A549 (cell line): ENCODE measurements at regions of chr1 and their contacts with region 1.

Region 1: GRCh38 chr1:172532700-172533509 is at the start of gene SUCO:
- DNase-seq: peak; percentile 91 to 99
- ATAC-seq: peak; percentile 94 to 96
- H3K4me3 ChIP-seq: peak within 1 kb of the TSS; percentile 75
- H3K27ac ChIP-seq: peak within 1 kb of the TSS; percentile 95 to 96
- H3K4me1 ChIP-seq: peaks cover 33% of the 10 kb centered on the region
- CTCF ChIP-seq: no peak
- EP300 ChIP-seq: no peak
- POLR2A ChIP-seq: peak; percentile 78
- RAD21 ChIP-seq: peak; percentile 8 to 12; a peak in 1 of 5 replicates
- polyA plus RNA-seq, gene SUCO: 17.7 and 21.8 TPM in 2 replicates

Region 2: GRCh38 chr1:172286629-172287076 is 246.3 kb before region 1 on chr1:
- CTCF ChIA-PET with region 1: no interaction called
- POLR2A ChIA-PET with region 1: no interaction called
- DNase-seq: peak in 1 of 2 experiments; percentile 26
- ATAC-seq: peak in 1 of 2 experiments; percentile 62; a peak in 3 of 6 replicates
- H3K4me3 ChIP-seq: no peak overlapping the region
- H3K27ac ChIP-seq: peak overlapping the region; percentile 37 to 46; a peak in 5 of 6 replicates
- H3K4me1 ChIP-seq: peaks cover 13% of the 10 kb centered on the region
- CTCF ChIP-seq: no peak
- EP300 ChIP-seq: no peak
- POLR2A ChIP-seq: no peak
- RAD21 ChIP-seq: no peak

Region 3: GRCh38 chr1:172408958-172409357 is 123.9 kb before region 1 on chr1:
- CTCF ChIA-PET with region 1: no interaction called
- POLR2A ChIA-PET with region 1: no interaction called
- DNase-seq: no peak
- ATAC-seq: no peak
- H3K4me3 ChIP-seq: no peak overlapping the region
- H3K27ac ChIP-seq: no peak overlapping the region
- H3K4me1 ChIP-seq: no peaks in the 10 kb centered on the region
- CTCF ChIP-seq: no peak
- EP300 ChIP-seq: no peak
- POLR2A ChIP-seq: no peak
- RAD21 ChIP-seq: no peak

Region 4: GRCh38 chr1:172449585-172450534 is 83.0 kb before region 1 on chr1:
- CTCF ChIA-PET with region 1: interaction called, 13 read pairs
- POLR2A ChIA-PET with region 1: interaction called, 36 read pairs
- DNase-seq: peak; percentile 70 to 85
- ATAC-seq: peak; percentile 82 to 94
- H3K4me3 ChIP-seq: no peak overlapping the region
- H3K27ac ChIP-seq: peak overlapping the region; percentile 77 to 90
- H3K4me1 ChIP-seq: peaks cover 71% of the 10 kb centered on the region
- CTCF ChIP-seq: peak; percentile 88
- EP300 ChIP-seq: no peak
- POLR2A ChIP-seq: no peak
- RAD21 ChIP-seq: peak; percentile 91 to 92

Region 5: DNA sequence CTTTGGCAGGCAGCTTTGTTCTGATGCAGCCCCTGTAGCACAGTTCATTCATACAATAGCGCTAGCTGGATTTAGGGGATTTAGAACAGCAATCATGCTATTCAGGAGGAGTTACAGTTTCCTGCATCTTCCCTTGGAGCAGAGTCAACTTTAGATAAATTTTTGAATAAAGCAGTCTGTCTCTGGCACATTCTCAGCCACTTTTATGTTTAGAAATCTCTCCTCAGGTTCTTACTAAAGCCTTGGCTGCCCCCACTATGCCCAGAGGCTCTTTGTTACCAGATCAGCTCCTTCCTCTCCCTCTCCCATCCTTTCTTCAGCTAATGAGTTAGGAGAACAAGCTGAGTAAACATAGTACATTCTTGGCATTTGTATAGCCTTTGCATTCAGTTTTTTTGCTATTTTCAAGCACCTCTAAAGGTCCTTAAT is 72.0 kb before region 1 on chr1:
- CTCF ChIA-PET with region 1: no interaction called
- POLR2A ChIA-PET with region 1: interaction called, 17 read pairs
- DNase-seq: peak in 1 of 2 experiments; percentile 30
- ATAC-seq: peak; percentile 46 to 71; a peak in 5 of 6 replicates
- H3K4me3 ChIP-seq: no peak overlapping the region
- H3K27ac ChIP-seq: peak overlapping the region; percentile 65 to 79
- H3K4me1 ChIP-seq: peaks cover 27% of the 10 kb centered on the region
- CTCF ChIP-seq: no peak
- EP300 ChIP-seq: no peak
- POLR2A ChIP-seq: no peak
- RAD21 ChIP-seq: no peak; a peak in 1 of 5 replicates

Region 6: GRCh38 chr1:172515927-172516326 is 17.0 kb before region 1 on chr1:
- CTCF ChIA-PET with region 1: no interaction called
- POLR2A ChIA-PET with region 1: interaction called, 11 read pairs
- DNase-seq: no peak
- ATAC-seq: no peak
- H3K4me3 ChIP-seq: no peak overlapping the region
- H3K27ac ChIP-seq: no peak overlapping the region
- H3K4me1 ChIP-seq: no peaks in the 10 kb centered on the region
- CTCF ChIP-seq: no peak
- EP300 ChIP-seq: no peak
- POLR2A ChIP-seq: no peak
- RAD21 ChIP-seq: no peak